MCF 10A (cell line): ENCODE measurements at regions of chrX and their contacts with region 1.

Region 1: GRCh38 chrX:36867143-36867542 is 141.0 kb upstream of the FAM47C start:
- DNase-seq: peak; percentile 57
- H3K4me3 Mint-ChIP-seq: no peak overlapping the region
- H3K27ac Mint-ChIP-seq: no peak overlapping the region
- H3K4me1 Mint-ChIP-seq: peaks cover 5% of the 10 kb centered on the region
- H3K27me3 Mint-ChIP-seq: peaks cover 39% of the 10 kb centered on the region
- CTCF ChIP-seq: peak; percentile 47

Region 2: GRCh38 chrX:35380808-35381700 is 1486.1 kb before region 1 on chrX:
- CTCF ChIA-PET with region 1: interaction called, 5 read pairs
- POLR2A ChIA-PET with region 1: no interaction called
- intact Hi-C with region 1: loop called (anchors 1 kb)
- DNase-seq: peak; percentile 56
- H3K4me3 Mint-ChIP-seq: no peak overlapping the region
- H3K27ac Mint-ChIP-seq: no peak overlapping the region
- H3K4me1 Mint-ChIP-seq: no peaks in the 10 kb centered on the region
- H3K27me3 Mint-ChIP-seq: peaks cover 57% of the 10 kb centered on the region
- CTCF ChIP-seq: peak; percentile 71

Region 3: GRCh38 chrX:35711281-35711680 is 1155.9 kb before region 1 on chrX:
- CTCF ChIA-PET with region 1: no interaction called
- POLR2A ChIA-PET with region 1: no interaction called
- intact Hi-C with region 1: no loop called
- DNase-seq: no peak
- H3K4me3 Mint-ChIP-seq: no peak overlapping the region
- H3K27ac Mint-ChIP-seq: no peak overlapping the region
- H3K4me1 Mint-ChIP-seq: no peaks in the 10 kb centered on the region
- H3K27me3 Mint-ChIP-seq: peaks cover 12% of the 10 kb centered on the region
- CTCF ChIP-seq: no peak

Region 4: DNA sequence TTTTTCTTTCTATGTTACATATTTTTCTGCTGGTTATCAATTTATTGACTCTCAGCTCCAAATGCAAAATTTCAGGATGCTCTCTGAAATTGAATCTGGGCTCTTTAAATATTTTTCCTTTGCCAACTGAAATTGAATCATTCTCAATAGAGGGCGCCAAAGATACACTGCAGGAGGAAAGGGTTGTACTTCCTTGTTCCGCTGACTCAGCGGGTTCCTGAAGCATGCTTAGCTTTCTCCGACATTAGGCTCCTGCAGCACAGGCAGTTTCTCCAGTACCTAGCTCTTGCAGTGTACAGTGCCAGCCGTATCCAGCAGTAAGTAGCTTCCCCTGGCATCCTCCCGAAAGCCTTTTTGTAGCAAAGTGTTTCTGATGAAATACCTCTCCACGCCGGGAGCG is 976.4 kb before region 1 on chrX:
- CTCF ChIA-PET with region 1: interaction called, 3 read pairs
- POLR2A ChIA-PET with region 1: no interaction called
- intact Hi-C with region 1: loop called (anchors 2 kb)
- DNase-seq: peak; percentile 79
- H3K4me3 Mint-ChIP-seq: no peak overlapping the region
- H3K27ac Mint-ChIP-seq: no peak overlapping the region
- H3K4me1 Mint-ChIP-seq: no peaks in the 10 kb centered on the region
- H3K27me3 Mint-ChIP-seq: no peaks in the 10 kb centered on the region
- CTCF ChIP-seq: peak; percentile 56

Region 5: GRCh38 chrX:36684053-36684452 is 183.1 kb before region 1 on chrX:
- CTCF ChIA-PET with region 1: interaction called, 4 read pairs
- POLR2A ChIA-PET with region 1: no interaction called
- intact Hi-C with region 1: loop called (anchors 1 kb)
- DNase-seq: peak; percentile 30
- H3K4me3 Mint-ChIP-seq: no peak overlapping the region
- H3K27ac Mint-ChIP-seq: no peak overlapping the region
- H3K4me1 Mint-ChIP-seq: no peaks in the 10 kb centered on the region
- H3K27me3 Mint-ChIP-seq: peaks cover 46% of the 10 kb centered on the region
- CTCF ChIP-seq: no peak